ENCODE measurements at regions of chr1 and their contacts with region 1.

Region 1: GRCh38 chr1:17244816-17245740 is 3.8 kb upstream of the PADI3 start:
- DNase-seq: no peak
- H3K4me3 ChIP-seq: no peak overlapping the region
- H3K27ac ChIP-seq: no peak overlapping the region
- H3K4me1 ChIP-seq: peaks cover 0 to 31% (median 6%) of the 10 kb centered on the region in 3 donors
- H3K27me3 ChIP-seq: peaks cover 0 to 9% (median 0%) of the 10 kb centered on the region in 4 donors
- CTCF ChIP-seq: no peak
- POLR2A ChIP-seq: no peak

Region 2: GRCh38 chr1:17059739-17060460 is 185.2 kb before region 1 on chr1:
- intact Hi-C with region 1: loop called (anchors 10 kb)
- DNase-seq: no peak
- H3K4me3 ChIP-seq: no peak overlapping the region
- H3K27ac ChIP-seq: no peak overlapping the region
- H3K4me1 ChIP-seq: peaks cover 0 to 11% (median 0%) of the 10 kb centered on the region in 3 donors
- H3K27me3 ChIP-seq: peaks cover 0 to 12% (median 0%) of the 10 kb centered on the region in 4 donors
- CTCF ChIP-seq: peak in 5 of 6 experiments; percentile 49 to 80 (median 69)
- POLR2A ChIP-seq: no peak

Measured in esophagus squamous epithelium (tissue), 5 donors.